Activated CD8-positive, alpha-beta memory T cell treated with anti-CD3 and anti-CD28 coated beads, Interleukin-2, amount 10 ng/mL, durations not matched to agents 7 days and 5 days (primary cell): ENCODE measurements at regions of chr7 and their contacts with region 1.

Region 1: GRCh38 chr7:150368096-150368883 is at the start of gene REPIN1:
- DNase-seq: peak; percentile 89
- ATAC-seq: peak; percentile 78
- H3K4me3 Mint-ChIP-seq: peak within 1 kb of the TSS; percentile 95
- H3K27ac Mint-ChIP-seq: peak within 1 kb of the TSS; percentile 95
- H3K4me1 Mint-ChIP-seq: peaks cover 37% of the 10 kb centered on the region
- H3K27me3 Mint-ChIP-seq: no peaks in the 10 kb centered on the region
- total RNA-seq, gene REPIN1: 51.4 to 55.5 TPM

Region 2: DNA sequence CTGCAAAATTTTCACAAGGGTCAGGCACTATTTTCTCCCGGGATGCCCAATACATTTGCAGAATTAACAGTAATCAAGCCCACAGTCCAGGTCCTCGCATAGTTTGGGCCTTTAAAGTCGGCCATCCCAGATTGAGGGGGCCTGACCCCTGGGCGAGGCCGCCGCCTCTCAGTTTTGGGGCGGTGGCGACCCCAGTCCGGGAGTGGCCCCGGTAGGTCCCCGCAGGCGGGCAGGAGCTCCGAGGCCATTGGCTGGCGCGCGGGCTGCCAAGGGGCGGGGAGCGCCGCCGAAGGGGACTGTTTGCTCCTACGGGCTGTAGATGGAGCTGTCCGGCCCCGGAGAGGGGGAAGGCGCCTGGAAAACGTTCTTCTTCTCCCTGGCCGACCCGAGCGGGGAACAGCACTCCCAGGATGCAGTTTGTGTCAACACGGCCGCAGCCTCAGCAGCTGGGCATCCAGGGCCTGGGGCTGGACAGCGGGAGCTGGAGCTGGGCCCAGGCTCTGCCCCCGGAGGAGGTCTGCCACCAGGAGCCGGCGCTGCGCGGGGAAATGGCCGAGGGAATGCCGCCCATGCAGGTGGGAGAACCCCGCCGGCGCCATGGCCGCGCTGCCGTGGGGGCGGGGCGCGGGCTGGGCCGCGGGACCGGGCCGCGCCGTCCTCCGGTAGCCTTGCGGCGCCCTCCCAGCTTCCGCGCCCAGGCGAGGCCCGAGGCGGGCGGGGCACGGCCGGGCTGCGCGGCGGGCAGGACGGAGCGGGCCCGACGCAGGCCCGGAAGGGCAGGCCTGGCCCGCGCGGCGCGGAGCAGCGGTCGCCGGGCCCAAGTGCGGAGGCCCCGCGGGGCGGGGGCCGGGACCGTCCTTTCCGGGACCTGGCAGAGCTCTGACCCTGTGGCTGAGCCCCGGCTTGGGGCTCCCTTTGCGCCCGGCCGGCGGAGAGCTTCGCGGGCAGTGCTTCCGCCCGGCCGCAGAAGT is 1172.8 kb before region 1 on chr7 and contains the start of gene ZNF282:
- CTCF ChIA-PET with region 1: no interaction called
- DNase-seq: peak; percentile 87
- ATAC-seq: peak; percentile 93
- H3K4me3 Mint-ChIP-seq: peak within 1 kb of the TSS; percentile 94
- H3K27ac Mint-ChIP-seq: peak within 1 kb of the TSS; percentile 93
- H3K4me1 Mint-ChIP-seq: peaks cover 53% of the 10 kb centered on the region
- H3K27me3 Mint-ChIP-seq: peaks cover 2% of the 10 kb centered on the region
- total RNA-seq, gene ZNF282: 42.0 to 49.7 TPM

Region 3: DNA sequence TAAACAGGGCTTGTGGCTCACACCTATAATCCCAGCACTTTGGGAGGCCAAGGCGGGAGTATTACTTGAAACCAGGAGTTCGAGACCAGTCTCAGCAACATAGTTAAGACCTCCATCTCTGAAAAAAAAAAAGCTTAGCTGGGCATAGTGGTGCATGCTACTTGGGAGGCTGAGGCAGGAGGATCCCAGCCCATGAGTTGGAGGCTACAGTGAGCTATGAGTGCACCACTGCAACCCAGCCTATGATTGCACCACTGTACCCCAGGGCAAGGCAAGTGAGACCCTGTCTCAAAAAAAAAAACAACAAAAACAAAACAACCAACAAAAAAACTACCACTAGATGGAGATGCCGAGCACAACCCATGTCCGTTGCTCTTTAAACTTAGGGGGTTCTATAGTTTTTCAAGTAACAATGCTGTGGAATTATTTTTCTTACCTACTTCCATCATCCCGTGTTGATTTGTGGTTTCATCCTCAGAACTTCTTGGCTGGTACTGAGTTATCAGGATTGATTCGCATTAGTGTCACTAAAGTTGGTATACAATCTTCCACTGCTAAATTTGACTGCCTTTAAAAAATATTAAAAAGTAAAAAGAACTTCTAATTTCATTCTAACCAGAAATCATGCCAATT is 11.9 kb before region 1 on chr7:
- CTCF ChIA-PET with region 1: interaction called, 56 read pairs
- DNase-seq: no peak
- ATAC-seq: peak; percentile 34
- H3K4me3 Mint-ChIP-seq: no peak overlapping the region
- H3K27ac Mint-ChIP-seq: no peak overlapping the region
- H3K4me1 Mint-ChIP-seq: peaks cover 43% of the 10 kb centered on the region
- H3K27me3 Mint-ChIP-seq: peaks cover 6% of the 10 kb centered on the region